Naive thymus-derived CD8-positive, alpha-beta T cell (primary cell): ENCODE measurements at regions of chr13 and their contacts with region 1.

Region 1: GRCh38 chr13:24254146-24254841 is 55.1 kb upstream of the C1QTNF9 start:
- DNase-seq: peak; percentile 28 to 80 (median 66)
- ATAC-seq: peak; percentile 45 to 59
- H3K4me3 Mint-ChIP-seq: peak overlapping the region; percentile 90 to 99 (median 96)
- H3K27ac Mint-ChIP-seq: peak overlapping the region; percentile 93 to 100 (median 98)
- H3K4me1 Mint-ChIP-seq: peaks cover 55 to 98% (median 91%) of the 10 kb centered on the region in 4 donors
- H3K27me3 Mint-ChIP-seq: no peaks in the 10 kb centered on the region

Region 2: DNA sequence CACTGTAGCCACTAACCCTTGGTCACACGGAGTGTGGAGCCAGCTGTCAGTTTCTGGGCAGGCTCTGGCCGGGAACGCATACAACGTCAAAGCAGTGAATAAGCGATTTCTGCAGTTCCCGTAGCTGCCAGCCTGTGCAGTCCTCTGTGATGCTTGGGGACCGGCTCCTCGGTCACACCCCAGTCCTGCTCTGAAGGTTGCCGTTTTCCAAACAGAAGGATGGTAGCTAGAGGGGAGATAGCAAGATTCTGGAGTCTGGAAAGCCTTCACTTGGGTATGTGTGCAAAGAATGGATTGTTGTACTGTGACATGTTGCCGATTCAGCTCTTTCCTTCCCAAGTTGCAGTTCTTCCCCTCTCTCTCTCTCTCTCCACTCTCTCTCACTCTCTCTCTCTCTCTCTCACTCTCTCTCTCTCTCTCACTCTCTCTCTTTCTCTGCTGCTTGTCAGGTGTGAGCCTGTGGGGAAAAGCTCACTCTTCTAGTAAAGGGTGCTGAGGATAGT is 16.4 kb after region 1 on chr13:
- POLR2A ChIA-PET with region 1: interaction called, 661 read pairs
- DNase-seq: peak in 9 of 10 donors; percentile 38 to 79 (median 52)
- ATAC-seq: peak; percentile 26 to 29
- H3K4me3 Mint-ChIP-seq: peak overlapping the region; percentile 81 to 99 (median 96)
- H3K27ac Mint-ChIP-seq: peak overlapping the region; percentile 97 to 100 (median 99)
- H3K4me1 Mint-ChIP-seq: peaks cover 50 to 96% (median 88%) of the 10 kb centered on the region in 4 donors
- H3K27me3 Mint-ChIP-seq: peaks cover 0 to 2% (median 0%) of the 10 kb centered on the region in 5 donors